Activated CD8-positive, alpha-beta T cell treated with anti-CD3 and anti-CD28 coated beads for 36 hours (primary cell): ENCODE measurements at regions of chr1 and their contacts with region 1.

Region 1: GRCh38 chr1:117758444-117759316 is 152.8 kb downstream of the TENT5C start:
- DNase-seq: peak; percentile 78
- ATAC-seq: peak; percentile 89
- H3K4me3 Mint-ChIP-seq: peak overlapping the region; percentile 62
- H3K27ac Mint-ChIP-seq: no peak overlapping the region
- H3K4me1 Mint-ChIP-seq: peaks cover 5% of the 10 kb centered on the region
- H3K27me3 Mint-ChIP-seq: peaks cover 12% of the 10 kb centered on the region
- CTCF ChIP-seq: peak; percentile 86

Region 2: DNA sequence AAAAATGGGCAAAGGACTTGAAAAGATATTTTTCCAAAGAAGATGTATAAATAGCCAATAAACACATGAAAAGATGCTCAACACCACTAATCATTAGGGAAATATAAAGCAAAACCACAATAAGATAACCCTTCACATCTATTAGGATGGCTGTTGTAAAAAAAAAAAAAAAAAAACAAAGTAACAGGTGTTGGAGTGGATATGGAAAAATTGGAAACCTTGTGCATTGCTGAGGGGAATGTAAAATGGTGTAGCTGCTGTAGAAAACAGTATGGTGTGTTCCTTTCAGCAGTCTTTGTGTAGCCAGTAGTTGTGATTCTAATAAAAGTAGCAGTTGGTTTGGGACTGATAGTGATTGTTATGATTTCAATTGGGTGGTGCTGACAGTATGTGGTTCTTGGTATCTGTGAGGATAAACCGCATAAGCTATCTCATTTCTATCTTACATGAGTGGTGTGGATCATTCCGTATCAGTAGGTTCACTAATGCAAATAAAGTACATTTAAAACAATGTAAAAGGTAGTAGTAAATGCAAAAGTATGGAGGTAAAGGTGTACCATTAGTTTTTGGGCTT is 371.5 kb before region 1 on chr1:
- CTCF ChIA-PET with region 1: no interaction called
- POLR2A ChIA-PET with region 1: no interaction called
- intact Hi-C with region 1: no loop called
- DNase-seq: no peak
- ATAC-seq: no peak
- H3K4me3 Mint-ChIP-seq: no peak overlapping the region
- H3K27ac Mint-ChIP-seq: peak overlapping the region; percentile 12
- H3K4me1 Mint-ChIP-seq: peaks cover 55% of the 10 kb centered on the region
- H3K27me3 Mint-ChIP-seq: no peaks in the 10 kb centered on the region
- CTCF ChIP-seq: no peak

Region 3: DNA sequence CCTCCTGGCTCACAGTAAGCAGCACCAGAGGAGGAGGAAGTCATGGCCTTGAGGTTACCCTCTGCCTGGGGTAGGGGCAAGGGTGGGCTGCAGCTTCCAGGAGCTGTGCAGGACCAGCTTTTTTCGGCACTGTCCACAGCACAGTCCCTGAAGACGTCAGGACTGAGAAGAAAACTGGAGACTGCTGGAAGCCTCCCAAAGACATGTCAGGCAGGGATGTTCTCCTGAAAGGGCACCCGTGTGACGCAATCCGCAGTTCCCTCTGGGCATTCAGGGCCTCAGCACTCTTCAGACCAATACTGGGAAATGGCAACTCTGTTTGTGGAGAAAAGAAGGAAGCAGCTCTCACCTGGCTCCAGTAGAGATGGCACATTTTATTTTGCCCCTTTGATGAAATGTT is 217.7 kb before region 1 on chr1:
- CTCF ChIA-PET with region 1: interaction called, 348 read pairs
- POLR2A ChIA-PET with region 1: no interaction called
- intact Hi-C with region 1: loop called (anchors 2 kb)
- DNase-seq: no peak
- ATAC-seq: peak; percentile 14
- H3K4me3 Mint-ChIP-seq: no peak overlapping the region
- H3K27ac Mint-ChIP-seq: peak overlapping the region; percentile 12
- H3K4me1 Mint-ChIP-seq: peaks cover 18% of the 10 kb centered on the region
- H3K27me3 Mint-ChIP-seq: no peaks in the 10 kb centered on the region
- CTCF ChIP-seq: no peak

Region 4: DNA sequence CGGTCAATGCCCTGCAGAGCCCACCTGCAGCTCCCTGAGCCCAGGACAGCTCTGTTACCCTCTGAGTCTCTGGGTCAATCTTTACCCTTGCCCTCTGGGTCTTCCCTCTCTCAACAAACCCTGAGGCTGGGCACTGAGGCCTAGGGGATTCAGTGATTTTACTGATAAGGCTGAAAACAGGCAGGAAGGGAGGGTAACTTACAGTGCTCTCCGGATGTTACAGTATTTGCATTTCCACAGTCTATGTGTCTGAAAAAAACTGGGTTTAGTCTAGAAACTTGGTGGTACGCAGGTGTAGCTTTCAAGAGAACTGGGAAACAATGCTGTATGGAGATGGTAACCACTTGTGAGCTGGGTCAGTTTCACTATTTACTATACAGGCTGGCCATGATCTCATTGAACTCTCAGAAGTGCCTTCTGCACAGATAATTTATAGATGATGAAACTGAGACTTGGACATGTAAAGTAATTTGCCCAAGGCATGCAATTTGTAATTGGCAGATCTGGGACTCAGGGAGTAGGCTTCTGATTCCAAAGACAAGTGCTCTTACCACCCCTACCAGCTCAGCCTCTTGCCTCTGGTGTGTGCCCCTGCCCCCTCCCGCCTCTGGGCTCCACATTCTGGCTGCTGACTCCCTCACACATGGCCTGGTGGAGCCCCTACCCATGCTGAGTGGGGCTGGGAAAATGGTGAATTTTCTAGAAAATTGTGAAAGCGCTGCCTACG is 104.0 kb before region 1 on chr1:
- CTCF ChIA-PET with region 1: interaction called, 12 read pairs
- POLR2A ChIA-PET with region 1: no interaction called
- intact Hi-C with region 1: no loop called
- DNase-seq: peak; percentile 35
- ATAC-seq: peak; percentile 54
- H3K4me3 Mint-ChIP-seq: no peak overlapping the region
- H3K27ac Mint-ChIP-seq: peak overlapping the region; percentile 60
- H3K4me1 Mint-ChIP-seq: peaks cover 76% of the 10 kb centered on the region
- H3K27me3 Mint-ChIP-seq: peaks cover 31% of the 10 kb centered on the region
- CTCF ChIP-seq: no peak

Region 5: DNA sequence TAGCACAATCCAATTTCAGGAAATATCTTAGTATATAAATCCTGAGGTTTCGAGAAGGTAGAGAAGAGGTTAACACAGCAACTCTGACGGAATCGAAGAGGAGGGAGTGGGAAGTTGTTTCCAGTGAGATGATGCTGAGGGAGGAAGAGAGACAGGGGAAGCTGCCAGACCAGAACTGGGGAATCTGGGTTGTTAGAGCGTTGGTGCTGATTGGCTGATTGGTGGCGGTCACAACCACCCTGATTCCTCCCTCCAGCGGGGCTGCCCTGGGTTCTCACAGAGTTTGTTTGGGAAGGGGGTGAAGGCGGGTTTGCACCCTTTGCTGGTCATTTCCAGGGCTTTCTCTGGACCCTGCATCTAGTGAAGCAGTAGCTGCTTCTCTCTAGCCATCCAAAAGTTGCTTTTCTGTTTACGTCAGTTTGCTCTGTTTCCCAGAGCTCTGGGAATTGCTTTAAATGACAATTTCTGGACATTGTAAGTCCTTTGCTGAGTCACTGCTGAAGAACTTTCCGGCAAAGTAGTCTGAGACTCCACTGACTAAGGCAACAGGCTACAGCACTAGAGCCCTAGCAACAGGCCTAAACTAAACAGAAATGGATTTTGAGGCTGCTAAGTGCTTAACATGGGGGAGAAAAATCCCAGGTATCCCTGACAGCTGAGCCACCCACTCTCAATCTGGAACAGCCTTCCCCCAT is 62.7 kb before region 1 on chr1:
- CTCF ChIA-PET with region 1: interaction called, 11 read pairs
- POLR2A ChIA-PET with region 1: no interaction called
- intact Hi-C with region 1: no loop called
- DNase-seq: no peak
- ATAC-seq: no peak
- H3K4me3 Mint-ChIP-seq: no peak overlapping the region
- H3K27ac Mint-ChIP-seq: no peak overlapping the region
- H3K4me1 Mint-ChIP-seq: no peaks in the 10 kb centered on the region
- H3K27me3 Mint-ChIP-seq: peaks cover 13% of the 10 kb centered on the region
- CTCF ChIP-seq: no peak

Region 6: GRCh38 chr1:117740496-117740895 is 18.2 kb before region 1 on chr1:
- CTCF ChIA-PET with region 1: interaction called, 40 read pairs
- POLR2A ChIA-PET with region 1: no interaction called
- intact Hi-C with region 1: no loop called
- DNase-seq: no peak
- ATAC-seq: no peak
- H3K4me3 Mint-ChIP-seq: no peak overlapping the region
- H3K27ac Mint-ChIP-seq: no peak overlapping the region
- H3K4me1 Mint-ChIP-seq: peaks cover 4% of the 10 kb centered on the region
- H3K27me3 Mint-ChIP-seq: no peaks in the 10 kb centered on the region
- CTCF ChIP-seq: no peak

Region 7: DNA sequence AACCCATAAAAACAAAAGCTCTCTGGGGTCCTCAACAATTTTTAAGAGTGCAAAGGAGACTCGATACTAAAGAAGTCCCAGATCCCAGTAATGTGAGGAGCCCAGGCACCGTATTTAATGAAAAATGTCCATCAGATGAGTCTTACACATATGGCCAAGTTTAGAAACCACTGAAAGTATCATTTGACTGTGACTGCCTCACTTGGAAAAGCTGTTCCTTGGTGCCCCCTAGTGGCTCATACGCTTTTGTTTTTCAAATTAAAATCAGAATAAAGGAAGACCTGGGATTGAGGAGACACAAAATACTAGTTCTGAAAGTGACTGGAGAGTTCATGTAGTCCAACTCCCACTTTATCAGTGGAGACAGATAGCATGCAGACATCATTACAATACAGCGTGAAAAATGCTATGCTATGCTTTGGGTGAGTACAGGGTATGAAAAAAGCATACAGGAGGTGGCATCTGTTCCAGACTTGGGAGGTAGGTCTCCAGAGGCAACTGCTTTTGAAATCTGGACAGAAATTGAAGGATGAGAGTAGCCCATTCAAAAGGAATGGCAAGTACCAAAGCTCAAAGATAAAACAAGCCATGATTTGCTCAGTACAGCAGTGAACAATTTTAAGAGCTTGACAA is 136.9 kb after region 1 on chr1:
- CTCF ChIA-PET with region 1: interaction called, 23 read pairs
- POLR2A ChIA-PET with region 1: no interaction called
- intact Hi-C with region 1: no loop called
- DNase-seq: peak; percentile 85
- ATAC-seq: peak; percentile 88
- H3K4me3 Mint-ChIP-seq: no peak overlapping the region
- H3K27ac Mint-ChIP-seq: no peak overlapping the region
- H3K4me1 Mint-ChIP-seq: peaks cover 2% of the 10 kb centered on the region
- H3K27me3 Mint-ChIP-seq: no peaks in the 10 kb centered on the region
- CTCF ChIP-seq: peak; percentile 82